ENCODE measurements at regions of chr11 and their contacts with region 1.

Region 1: DNA sequence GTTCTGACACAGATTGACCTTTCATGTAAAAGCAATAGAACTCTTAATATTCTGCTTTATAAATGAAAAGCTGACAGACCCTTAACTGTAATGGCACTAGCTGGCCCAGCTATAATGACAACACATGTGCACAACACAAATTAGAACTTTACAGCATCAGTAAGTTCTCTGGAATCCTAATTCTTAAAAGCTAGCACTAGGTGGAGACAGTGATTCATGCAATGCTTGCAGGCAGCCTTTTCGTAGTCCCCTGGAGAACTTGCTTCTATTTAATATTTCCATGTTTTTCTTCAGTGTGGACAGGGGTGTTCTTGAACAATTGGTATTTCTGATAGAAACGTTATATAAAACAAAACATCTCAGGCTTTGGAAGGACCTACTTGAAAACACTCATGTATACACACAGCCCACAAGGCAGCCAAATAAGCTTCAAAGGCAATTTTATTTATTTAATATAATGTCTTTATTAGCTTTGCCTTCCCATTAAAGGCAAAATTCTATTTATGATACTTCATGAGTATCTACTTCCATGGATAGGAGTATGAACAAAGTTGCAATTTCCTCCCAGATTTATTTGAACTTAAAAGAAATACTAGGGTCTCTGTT is 374.3 kb upstream of the MPPED2 start:
- H3K4me3 ChIP-seq: no peak overlapping the region
- H3K27ac ChIP-seq: no peak overlapping the region
- H3K4me1 ChIP-seq: no peaks in the 10 kb centered on the region
- CTCF ChIP-seq: no peak

Region 2: GRCh38 chr11:30830681-30831080 is 129.8 kb before region 1 on chr11:
- CTCF ChIA-PET with region 1: no interaction called
- POLR2A ChIA-PET with region 1: no interaction called
- H3K4me3 ChIP-seq: no peak overlapping the region
- H3K27ac ChIP-seq: no peak overlapping the region
- H3K4me1 ChIP-seq: no peaks in the 10 kb centered on the region
- CTCF ChIP-seq: no peak

Region 3: DNA sequence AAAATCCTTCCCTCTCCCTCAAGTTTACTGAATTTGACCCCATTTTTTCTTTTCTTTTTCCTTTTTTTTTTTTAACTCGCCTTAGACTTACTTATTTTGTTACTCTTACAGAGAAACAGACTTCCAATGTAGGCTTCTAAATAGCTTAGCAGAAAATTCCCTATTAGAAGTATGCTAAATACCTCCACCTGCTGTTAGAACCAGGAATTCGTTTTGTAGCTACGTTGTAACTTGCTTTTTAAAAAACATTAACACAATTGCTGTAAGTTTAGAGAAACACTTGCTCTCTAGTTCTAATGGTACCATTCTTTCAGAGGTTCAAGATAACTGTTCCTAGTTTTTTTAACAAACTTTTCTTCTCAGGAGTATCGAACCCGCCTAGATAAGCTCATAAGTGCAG is 84.8 kb after region 1 on chr11:
- CTCF ChIA-PET with region 1: interaction called, 58 read pairs
- POLR2A ChIA-PET with region 1: no interaction called
- H3K4me3 ChIP-seq: no peak overlapping the region
- H3K27ac ChIP-seq: no peak overlapping the region
- H3K4me1 ChIP-seq: no peaks in the 10 kb centered on the region
- CTCF ChIP-seq: no peak